Prostate gland (tissue), 2 donors: ENCODE measurements at regions of chr11 and their contacts with region 1.

Region 1: DNA sequence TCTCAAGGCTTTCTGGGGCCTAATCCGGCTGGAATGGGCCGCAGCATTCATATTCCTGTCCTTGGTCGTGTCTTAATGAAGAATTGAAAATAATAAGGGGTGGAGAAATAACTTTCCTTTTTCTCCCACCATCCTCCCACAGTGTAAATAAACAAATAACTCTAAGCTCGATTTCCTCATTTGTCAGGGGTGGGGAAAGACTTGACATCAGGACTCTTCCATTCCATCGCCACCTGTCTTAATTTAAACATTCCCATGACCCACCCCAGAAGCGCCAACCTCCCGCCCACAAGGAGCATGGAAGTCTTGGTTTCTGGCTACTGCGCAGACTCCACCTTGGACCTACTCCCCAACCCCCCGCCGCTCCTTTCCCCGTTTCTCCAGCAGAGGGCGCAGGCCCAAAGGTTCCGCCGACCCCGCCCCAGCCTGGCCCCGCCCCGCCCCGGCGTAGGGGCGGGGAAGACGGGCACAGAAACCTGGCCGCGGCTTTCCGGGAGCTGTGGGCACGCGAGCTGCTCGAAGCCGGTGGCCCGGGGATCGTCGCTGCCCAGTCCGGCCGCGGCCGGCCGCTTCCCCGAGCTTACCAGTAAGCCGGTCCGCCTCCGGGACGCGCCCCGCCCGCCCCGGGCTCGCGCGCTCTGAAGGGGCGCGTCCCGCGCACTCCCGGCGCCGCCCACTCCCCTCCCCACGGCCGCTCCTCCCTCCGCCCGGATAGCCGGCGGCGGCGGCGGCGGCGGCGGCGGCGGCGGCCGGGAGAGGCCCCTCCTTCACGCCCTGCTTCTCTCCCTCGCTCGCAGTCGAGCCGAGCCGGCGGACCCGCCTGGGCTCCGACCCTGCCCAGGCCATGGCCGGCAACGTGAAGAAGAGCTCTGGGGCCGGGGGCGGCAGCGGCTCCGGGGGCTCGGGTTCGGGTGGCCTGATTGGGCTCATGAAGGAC is at the start of gene CBL:
- DNase-seq: peak; percentile 94
- H3K4me3 ChIP-seq: peak within 1 kb of the TSS; percentile 90 to 94
- H3K27ac ChIP-seq: peak within 1 kb of the TSS; percentile 96 to 98
- H3K4me1 ChIP-seq: no peaks in the 10 kb centered on the region
- H3K27me3 ChIP-seq: no peaks in the 10 kb centered on the region
- CTCF ChIP-seq: peak; percentile 78 to 91 (median 90)
- POLR2A ChIP-seq: peak; percentile 63
- total RNA-seq, gene CBL: 9.8 to 38.8 TPM

Region 2: GRCh38 chr11:119284344-119285157 is 78.7 kb after region 1 on chr11:
- intact Hi-C with region 1: loop called (anchors 5 kb)
- DNase-seq: no peak
- H3K4me3 ChIP-seq: no peak overlapping the region
- H3K27ac ChIP-seq: no peak overlapping the region
- H3K4me1 ChIP-seq: no peaks in the 10 kb centered on the region
- H3K27me3 ChIP-seq: no peaks in the 10 kb centered on the region
- CTCF ChIP-seq: peak in 3 of 4 experiments; percentile 31 to 44 (median 42)
- POLR2A ChIP-seq: no peak

Region 3: DNA sequence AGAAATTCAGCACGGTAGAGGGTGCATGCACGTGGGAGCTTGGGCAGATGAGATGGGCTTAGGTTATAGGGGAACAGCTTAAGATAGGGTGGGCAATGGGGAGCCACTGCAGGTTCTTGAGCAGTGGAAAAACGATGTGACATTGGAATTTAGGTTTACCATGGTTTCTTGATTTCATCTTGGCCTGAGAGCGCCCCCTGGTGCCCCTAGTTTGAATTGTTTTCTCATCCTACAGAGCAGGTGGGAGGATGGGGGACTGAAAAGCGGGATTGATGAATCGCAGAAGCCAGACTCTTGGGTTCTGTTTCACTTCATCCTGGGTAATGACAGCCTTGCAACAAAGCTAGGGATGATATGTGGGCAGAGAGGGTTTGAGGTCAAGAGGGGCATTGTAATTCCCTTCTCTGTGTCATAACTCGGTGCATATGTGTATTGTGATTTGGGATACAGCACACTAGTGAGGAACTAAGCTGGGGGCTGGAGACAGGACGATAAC is 117.7 kb after region 1 on chr11:
- intact Hi-C with region 1: loop called (anchors 5 kb)
- DNase-seq: peak; percentile 44
- H3K4me3 ChIP-seq: no peak overlapping the region
- H3K27ac ChIP-seq: no peak overlapping the region
- H3K4me1 ChIP-seq: no peaks in the 10 kb centered on the region
- H3K27me3 ChIP-seq: peaks cover 5% of the 10 kb centered on the region
- CTCF ChIP-seq: peak; percentile 43 to 66 (median 64)
- POLR2A ChIP-seq: no peak

Region 4: GRCh38 chr11:119338318-119338907 is 132.6 kb after region 1 on chr11:
- intact Hi-C with region 1: loop called (anchors 2 kb)
- DNase-seq: peak; percentile 50
- H3K4me3 ChIP-seq: no peak overlapping the region
- H3K27ac ChIP-seq: peak overlapping the region in 1 of 2 donors; percentile 18
- H3K4me1 ChIP-seq: peaks cover 20% of the 10 kb centered on the region
- H3K27me3 ChIP-seq: no peaks in the 10 kb centered on the region
- CTCF ChIP-seq: peak; percentile 70 to 79 (median 72)
- POLR2A ChIP-seq: no peak

Region 5: DNA sequence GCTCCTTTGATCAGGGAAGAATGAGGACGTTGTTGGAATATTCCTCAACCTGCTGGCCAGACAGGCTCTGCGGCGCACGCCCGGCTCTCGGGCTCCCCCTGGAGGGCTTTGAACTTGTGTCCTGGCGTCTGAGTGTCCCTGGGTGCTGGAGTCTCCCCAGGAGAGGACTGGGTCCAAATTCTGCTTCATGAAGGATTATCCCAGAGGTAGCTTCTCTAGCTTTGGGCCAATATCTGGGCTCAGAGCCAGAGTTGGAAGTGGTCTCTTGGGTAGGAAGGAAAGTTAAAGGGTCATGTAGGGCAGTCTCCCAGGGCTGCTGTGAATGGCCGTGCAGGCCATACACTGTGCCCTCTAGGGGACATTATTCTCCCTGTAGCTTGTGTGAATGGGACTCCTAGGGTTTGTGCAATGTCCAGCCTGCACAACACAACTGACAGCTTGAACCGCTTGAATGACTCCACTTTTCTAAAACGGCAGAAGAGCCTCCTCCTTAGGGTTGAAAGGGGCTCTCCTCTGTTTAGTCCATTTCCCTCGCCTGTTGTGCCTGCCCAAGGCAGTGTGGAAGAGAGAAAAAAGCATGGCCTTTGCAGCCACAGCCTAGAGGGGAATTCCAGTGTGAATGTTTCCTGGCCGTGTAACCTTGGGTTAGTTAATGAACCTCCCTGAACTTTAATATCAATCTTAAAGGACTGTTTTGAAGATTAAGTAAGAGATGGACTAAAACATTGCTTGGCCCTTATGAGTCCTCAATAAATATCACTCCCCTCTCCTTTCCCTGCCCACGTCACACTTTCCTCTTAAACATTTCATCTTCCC is 328.3 kb after region 1 on chr11:
- intact Hi-C with region 1: no loop called
- DNase-seq: peak; percentile 53
- H3K4me3 ChIP-seq: no peak overlapping the region
- H3K27ac ChIP-seq: no peak overlapping the region
- H3K4me1 ChIP-seq: no peaks in the 10 kb centered on the region
- H3K27me3 ChIP-seq: no peaks in the 10 kb centered on the region
- CTCF ChIP-seq: peak; percentile 52 to 69 (median 60)
- POLR2A ChIP-seq: no peak